Activated CD4-positive, alpha-beta T cell treated with anti-CD3 and anti-CD28 coated beads, Interleukin-2, amount 10 ng/mL, durations not matched to agents 7 days and 5 days (primary cell): ENCODE measurements at regions of chr1 and their contacts with region 1.

Region 1: GRCh38 chr1:117664314-117664713 is 58.5 kb downstream of the TENT5C start:
- DNase-seq: peak; percentile 84
- H3K4me3 Mint-ChIP-seq: peak overlapping the region; percentile 11
- H3K27ac Mint-ChIP-seq: peak overlapping the region; percentile 94
- H3K4me1 Mint-ChIP-seq: peaks cover 84% of the 10 kb centered on the region
- H3K27me3 Mint-ChIP-seq: peaks cover 6% of the 10 kb centered on the region

Region 2: GRCh38 chr1:117606649-117607430 is 57.5 kb before region 1 on chr1:
- CTCF ChIA-PET with region 1: interaction called, 15 read pairs
- POLR2A ChIA-PET with region 1: interaction called, 10 read pairs
- DNase-seq: peak; percentile 66
- H3K4me3 Mint-ChIP-seq: peak overlapping the region; percentile 87
- H3K27ac Mint-ChIP-seq: peak overlapping the region; percentile 80
- H3K4me1 Mint-ChIP-seq: peaks cover 54% of the 10 kb centered on the region
- H3K27me3 Mint-ChIP-seq: peaks cover 18% of the 10 kb centered on the region

Region 3: GRCh38 chr1:117674521-117675397 is 10.4 kb after region 1 on chr1:
- CTCF ChIA-PET with region 1: interaction called, 26 read pairs
- POLR2A ChIA-PET with region 1: no interaction called
- DNase-seq: peak; percentile 65
- H3K4me3 Mint-ChIP-seq: no peak overlapping the region
- H3K27ac Mint-ChIP-seq: no peak overlapping the region
- H3K4me1 Mint-ChIP-seq: peaks cover 27% of the 10 kb centered on the region
- H3K27me3 Mint-ChIP-seq: peaks cover 13% of the 10 kb centered on the region

Region 4: DNA sequence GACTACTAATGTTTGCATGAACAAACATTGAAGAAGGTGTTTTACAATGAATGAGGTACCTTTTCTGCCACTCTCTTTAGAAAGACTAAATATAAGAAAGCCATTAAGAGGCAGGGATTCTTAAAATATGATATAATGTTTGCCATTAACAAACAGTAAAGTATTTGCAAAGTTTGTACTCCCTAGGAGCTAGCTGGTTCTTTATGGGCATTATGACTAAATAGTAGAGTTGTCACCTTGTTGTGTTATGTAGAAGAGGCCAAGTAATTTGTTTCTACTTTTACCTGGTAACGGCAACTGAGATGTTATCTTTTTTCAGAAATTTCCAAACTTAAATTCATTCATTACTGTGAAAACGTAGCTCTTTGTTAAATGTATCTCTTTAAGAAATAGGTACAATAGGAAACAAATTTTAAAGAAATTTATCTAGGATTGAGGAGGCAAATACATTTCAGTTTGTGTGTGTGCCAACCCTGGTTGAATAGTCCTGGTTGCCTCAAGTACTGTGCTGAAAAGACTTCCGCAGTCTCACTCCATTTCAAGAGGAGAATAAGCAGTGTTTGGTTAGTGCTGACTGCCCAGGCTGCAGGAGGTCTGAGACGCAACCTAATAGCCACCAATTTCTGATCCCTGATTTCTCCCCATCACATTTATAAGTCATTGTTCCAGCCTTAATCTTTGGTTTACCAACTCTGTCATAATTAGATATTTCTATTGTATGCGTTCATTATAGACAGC is 317.3 kb after region 1 on chr1:
- CTCF ChIA-PET with region 1: no interaction called
- POLR2A ChIA-PET with region 1: no interaction called
- DNase-seq: no peak
- H3K4me3 Mint-ChIP-seq: no peak overlapping the region
- H3K27ac Mint-ChIP-seq: no peak overlapping the region
- H3K4me1 Mint-ChIP-seq: no peaks in the 10 kb centered on the region
- H3K27me3 Mint-ChIP-seq: peaks cover 5% of the 10 kb centered on the region